K562 (cell line): ENCODE measurements at regions of chr5 and their contacts with region 1.

Region 1: DNA sequence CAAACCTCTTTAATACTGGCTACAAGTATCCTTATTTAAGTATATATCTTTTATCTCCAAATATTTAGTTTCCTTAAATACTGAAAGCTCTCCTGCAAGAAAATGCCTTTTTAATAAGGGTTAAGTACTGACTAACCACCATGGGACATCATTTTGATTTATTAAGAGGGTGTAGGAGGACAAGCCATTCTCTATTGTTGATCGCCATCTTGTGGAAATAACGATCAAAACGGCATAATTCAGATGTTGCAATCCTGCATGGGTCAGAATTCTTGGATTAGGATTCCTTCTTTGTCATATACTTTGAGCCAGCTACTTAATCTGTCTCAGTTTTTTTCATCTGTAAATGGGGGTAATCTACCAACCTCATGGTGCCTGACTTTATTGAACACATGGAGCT is 28.7 kb upstream of the C5orf46 start:
- DNase-seq: peak in 1 of 4 experiments; percentile 5
- ATAC-seq: peak; percentile 50; the same call in 1 of the 3 replicates
- H3K4me3 ChIP-seq: no peak overlapping the region
- H3K27ac ChIP-seq: no peak overlapping the region
- H3K4me1 ChIP-seq: no peaks in the 10 kb centered on the region
- H3K27me3 ChIP-seq: no peaks in the 10 kb centered on the region
- CTCF ChIP-seq: peak in 1 of 3 experiments; percentile 34; a peak in 3 of 6 replicates
- EP300 ChIP-seq: no peak
- POLR2A ChIP-seq: no peak
- RAD21 ChIP-seq: peak; percentile 69 to 76

Region 2: DNA sequence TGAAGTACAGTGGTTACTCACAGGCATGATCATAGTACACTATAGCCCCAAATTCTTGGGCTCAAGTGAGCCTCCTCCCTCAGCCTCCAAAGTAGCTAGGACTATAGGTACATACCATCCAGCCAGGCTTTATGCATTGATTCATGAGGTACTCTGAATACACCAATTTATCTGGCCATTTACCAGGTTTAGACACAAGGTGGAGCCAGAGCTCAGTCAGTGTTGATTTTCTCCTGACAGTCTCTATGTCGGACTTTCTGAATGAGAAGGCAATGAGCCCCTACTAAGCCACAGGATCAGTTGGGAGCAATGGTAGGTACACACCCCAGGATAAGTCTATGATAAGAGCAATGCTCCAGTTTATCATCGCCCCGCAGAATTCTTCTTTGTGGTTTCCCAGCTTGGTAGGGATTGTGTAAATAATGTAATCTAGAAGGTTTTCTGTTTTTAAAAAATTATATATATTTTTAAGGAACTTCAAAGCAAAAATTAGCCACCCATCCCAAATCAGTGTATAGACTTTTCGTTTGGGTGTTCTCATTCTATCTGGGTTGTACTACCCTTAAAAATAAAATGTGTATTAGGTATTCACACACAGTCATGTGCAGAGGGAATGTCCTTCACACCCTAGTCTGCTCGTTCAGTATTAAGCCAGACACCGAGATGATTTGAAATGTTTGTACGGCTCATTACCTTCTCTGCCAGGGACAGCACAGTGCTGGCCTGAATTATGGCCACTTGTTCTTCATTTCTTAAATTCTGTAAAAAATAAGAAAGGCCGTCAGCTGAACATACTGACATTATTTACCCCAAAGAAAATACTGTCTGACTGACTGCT is 306.8 kb before region 1 on chr5:
- CTCF ChIA-PET with region 1: no interaction called
- POLR2A ChIA-PET with region 1: no interaction called
- in situ Hi-C with region 1: no loop called
- intact Hi-C with region 1: loop called (anchors 10 kb)
- DNase-seq: peak; percentile 17 to 55 (median 20)
- ATAC-seq: peak; percentile 71
- H3K4me3 ChIP-seq: no peak overlapping the region
- H3K27ac ChIP-seq: no peak overlapping the region
- H3K4me1 ChIP-seq: no peaks in the 10 kb centered on the region
- H3K27me3 ChIP-seq: no peaks in the 10 kb centered on the region
- CTCF ChIP-seq: peak; percentile 12 to 52 (median 48); a peak in 5 of 6 replicates
- EP300 ChIP-seq: no peak
- POLR2A ChIP-seq: no peak
- RAD21 ChIP-seq: peak; percentile 69 to 71

Region 3: GRCh38 chr5:148499452-148499851 is 564.4 kb after region 1 on chr5:
- CTCF ChIA-PET with region 1: no interaction called
- POLR2A ChIA-PET with region 1: no interaction called
- in situ Hi-C with region 1: no loop called
- intact Hi-C with region 1: no loop called
- DNase-seq: no peak
- ATAC-seq: no peak
- H3K4me3 ChIP-seq: no peak overlapping the region
- H3K27ac ChIP-seq: no peak overlapping the region
- H3K4me1 ChIP-seq: no peaks in the 10 kb centered on the region
- H3K27me3 ChIP-seq: no peaks in the 10 kb centered on the region; a peak in 1 of 5 replicates
- CTCF ChIP-seq: no peak
- EP300 ChIP-seq: no peak
- POLR2A ChIP-seq: no peak
- RAD21 ChIP-seq: no peak